B cell (primary cell): ENCODE measurements at regions of chr20 and their contacts with region 1.

Region 1: DNA sequence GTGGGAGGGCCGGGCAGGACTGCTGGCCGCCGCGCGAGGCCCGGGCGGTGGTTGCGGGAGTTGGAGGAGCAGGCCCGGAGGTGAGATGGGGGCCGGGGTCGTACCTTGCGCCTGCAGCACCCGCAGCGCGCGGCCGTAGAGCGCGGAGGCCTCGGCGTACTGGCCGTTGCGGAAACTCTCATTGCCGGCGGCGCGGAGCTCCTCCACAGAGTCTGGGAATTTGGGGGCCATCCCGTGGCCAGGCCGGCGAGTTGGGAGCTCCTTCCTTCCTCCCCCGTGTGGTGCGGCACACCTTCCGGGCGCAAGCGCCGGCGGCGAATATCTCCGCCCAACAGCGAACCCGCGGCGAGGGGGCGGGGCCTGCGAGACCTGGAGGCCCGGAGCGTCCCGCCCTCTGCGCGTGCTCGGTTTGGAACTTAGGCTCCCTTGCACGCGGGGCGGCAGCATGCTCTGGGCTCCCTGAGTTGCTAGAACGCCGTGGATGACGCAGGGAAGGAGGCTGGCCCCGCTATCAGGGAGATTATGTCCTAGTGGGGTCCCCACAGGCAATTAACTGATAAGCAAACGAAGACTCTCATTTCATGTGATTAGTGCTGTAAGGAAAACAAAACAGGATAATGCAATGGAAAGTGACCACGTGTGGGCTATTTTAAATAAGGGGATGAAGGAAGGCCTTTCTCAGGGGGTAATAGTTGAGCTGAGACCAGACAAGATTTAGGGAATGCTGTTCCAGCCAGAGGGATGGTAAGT is at the start of gene TOMM34:
- DNase-seq: peak; percentile 93
- ATAC-seq: peak; percentile 96
- H3K4me3 ChIP-seq: peak within 1 kb of the TSS; percentile 36 to 93 (median 82)
- H3K4me3 Mint-ChIP-seq: peak within 1 kb of the TSS; percentile 92
- H3K27ac ChIP-seq: peak within 1 kb of the TSS in 1 of 2 donors; percentile 70
- H3K27ac Mint-ChIP-seq: peak within 1 kb of the TSS; percentile 93
- H3K4me1 ChIP-seq: peaks cover 42 to 54% of the 10 kb centered on the region in 2 donors
- H3K4me1 Mint-ChIP-seq: peaks cover 57% of the 10 kb centered on the region
- H3K27me3 ChIP-seq: no peaks in the 10 kb centered on the region
- H3K27me3 Mint-ChIP-seq: no peaks in the 10 kb centered on the region
- CTCF ChIP-seq: no peak
- total RNA-seq, gene TOMM34: 21.8 and 21.9 TPM in 2 replicates

Region 2: DNA sequence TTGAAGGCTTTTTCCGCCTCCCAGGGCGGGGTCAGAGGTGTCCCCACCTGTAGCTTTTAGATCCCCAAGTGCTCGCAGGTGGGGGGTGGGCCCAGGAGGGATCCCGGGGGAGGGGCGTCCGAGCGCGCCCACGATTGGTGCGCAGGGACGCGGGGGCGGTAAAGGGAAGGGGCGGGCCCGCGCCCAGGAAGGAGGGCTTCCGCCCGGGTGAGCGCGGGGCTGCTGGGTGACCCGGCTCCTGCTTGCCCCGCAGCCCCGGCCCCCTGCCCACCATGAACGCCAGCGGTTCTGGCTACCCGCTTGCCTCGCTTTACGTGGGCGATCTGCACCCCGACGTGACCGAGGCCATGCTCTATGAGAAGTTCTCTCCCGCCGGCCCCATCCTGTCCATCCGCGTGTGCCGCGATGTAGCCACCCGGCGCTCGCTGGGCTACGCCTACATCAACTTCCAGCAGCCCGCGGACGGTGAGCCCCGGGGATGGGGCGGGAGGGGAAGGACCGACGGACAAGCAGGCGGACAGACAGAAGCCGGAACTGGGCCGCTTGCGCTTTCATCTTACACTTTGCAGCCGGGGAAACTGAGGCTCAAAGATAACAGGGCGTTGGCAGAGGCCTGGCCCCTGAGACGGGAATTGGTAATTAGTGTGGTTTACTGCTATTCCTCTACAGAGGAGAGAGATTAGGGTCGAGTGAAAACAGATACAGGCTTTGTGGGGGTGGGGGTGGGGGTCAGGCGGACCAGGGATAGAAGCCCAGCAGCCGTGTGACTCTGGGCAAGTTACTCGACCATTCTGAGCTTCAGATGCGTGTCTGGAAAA is 50.2 kb before region 1 on chr20 and contains the start of gene PABPC1L:
- CTCF ChIA-PET with region 1: interaction called, 5 read pairs
- POLR2A ChIA-PET with region 1: no interaction called
- intact Hi-C with region 1: loop called (anchors 2 kb)
- DNase-seq: peak; percentile 84
- ATAC-seq: peak; percentile 98
- H3K4me3 ChIP-seq: peak within 1 kb of the TSS; percentile 50 to 85 (median 81)
- H3K4me3 Mint-ChIP-seq: peak within 1 kb of the TSS; percentile 91
- H3K27ac ChIP-seq: peak within 1 kb of the TSS in 1 of 2 donors; percentile 65
- H3K27ac Mint-ChIP-seq: peak within 1 kb of the TSS; percentile 65
- H3K4me1 ChIP-seq: peaks cover 13 to 18% of the 10 kb centered on the region in 2 donors
- H3K4me1 Mint-ChIP-seq: peaks cover 24% of the 10 kb centered on the region
- H3K27me3 ChIP-seq: no peaks in the 10 kb centered on the region
- H3K27me3 Mint-ChIP-seq: no peaks in the 10 kb centered on the region
- CTCF ChIP-seq: no peak
- total RNA-seq, gene PABPC1L: 100 and 105 TPM in 2 replicates

Region 3: GRCh38 chr20:44979090-44979621 is 18.9 kb after region 1 on chr20:
- CTCF ChIA-PET with region 1: interaction called, 32 read pairs
- POLR2A ChIA-PET with region 1: interaction called, 43 read pairs
- intact Hi-C with region 1: loop called (anchors 2 kb)
- DNase-seq: peak; percentile 93
- ATAC-seq: peak; percentile 91
- H3K4me3 ChIP-seq: peak overlapping the region; percentile 4 to 54 (median 32)
- H3K4me3 Mint-ChIP-seq: peak overlapping the region; percentile 68
- H3K27ac ChIP-seq: peak overlapping the region; percentile 97 to 98
- H3K27ac Mint-ChIP-seq: peak overlapping the region; percentile 95
- H3K4me1 ChIP-seq: peaks cover 34 to 43% of the 10 kb centered on the region in 2 donors
- H3K4me1 Mint-ChIP-seq: peaks cover 65% of the 10 kb centered on the region
- H3K27me3 ChIP-seq: no peaks in the 10 kb centered on the region
- H3K27me3 Mint-ChIP-seq: no peaks in the 10 kb centered on the region
- CTCF ChIP-seq: no peak

Region 4: DNA sequence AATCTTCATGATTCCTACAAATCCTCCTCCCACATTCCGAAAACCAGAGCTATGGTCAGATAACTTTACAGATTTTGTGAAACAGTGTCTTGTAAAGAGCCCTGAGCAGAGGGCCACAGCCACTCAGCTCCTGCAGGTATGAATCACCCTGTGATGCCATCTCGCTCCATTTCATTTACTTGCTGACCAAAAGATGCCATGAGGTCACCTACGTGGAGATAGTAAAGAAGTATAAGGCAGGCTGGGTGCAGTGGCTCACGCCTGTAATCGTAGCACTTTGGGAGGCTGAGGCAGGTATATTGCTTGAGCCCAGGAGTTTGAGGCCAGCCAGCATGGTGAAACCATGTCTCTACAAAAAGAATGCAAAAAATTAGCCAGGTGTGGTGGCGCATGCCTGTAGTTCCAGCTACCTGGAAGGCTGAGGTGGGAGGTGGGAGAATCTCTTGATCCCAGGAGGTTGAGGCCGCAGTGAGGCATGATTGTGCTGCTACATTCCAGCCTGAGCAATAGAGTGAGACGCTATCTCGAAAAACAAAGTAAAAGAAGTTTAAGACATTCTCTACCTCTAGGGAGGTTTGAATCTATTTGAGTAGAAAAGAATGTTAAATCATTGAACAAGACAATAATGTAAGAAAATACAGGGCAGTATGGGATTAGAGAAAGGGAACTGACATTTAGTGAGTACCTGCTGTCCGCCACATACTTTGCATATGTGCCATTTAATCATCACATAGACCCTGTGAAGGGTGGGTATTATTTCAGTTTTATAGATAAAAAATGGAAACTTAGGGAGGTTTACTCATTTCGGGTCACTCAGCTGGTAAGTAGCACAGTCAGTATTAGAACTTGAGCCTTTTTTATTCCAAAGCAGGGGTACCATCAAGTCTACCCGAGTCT is 37.1 kb after region 1 on chr20:
- CTCF ChIA-PET with region 1: interaction called, 4 read pairs
- POLR2A ChIA-PET with region 1: no interaction called
- intact Hi-C with region 1: loop called (anchors 5 kb)
- DNase-seq: peak; percentile 45
- ATAC-seq: peak; percentile 91
- H3K4me3 ChIP-seq: no peak overlapping the region
- H3K4me3 Mint-ChIP-seq: peak overlapping the region; percentile 68
- H3K27ac ChIP-seq: peak overlapping the region in 1 of 2 donors; percentile 70
- H3K27ac Mint-ChIP-seq: peak overlapping the region; percentile 75
- H3K4me1 ChIP-seq: peaks cover 13 to 23% of the 10 kb centered on the region in 2 donors
- H3K4me1 Mint-ChIP-seq: peaks cover 40% of the 10 kb centered on the region
- H3K27me3 ChIP-seq: no peaks in the 10 kb centered on the region
- H3K27me3 Mint-ChIP-seq: no peaks in the 10 kb centered on the region
- CTCF ChIP-seq: no peak

Region 5: DNA sequence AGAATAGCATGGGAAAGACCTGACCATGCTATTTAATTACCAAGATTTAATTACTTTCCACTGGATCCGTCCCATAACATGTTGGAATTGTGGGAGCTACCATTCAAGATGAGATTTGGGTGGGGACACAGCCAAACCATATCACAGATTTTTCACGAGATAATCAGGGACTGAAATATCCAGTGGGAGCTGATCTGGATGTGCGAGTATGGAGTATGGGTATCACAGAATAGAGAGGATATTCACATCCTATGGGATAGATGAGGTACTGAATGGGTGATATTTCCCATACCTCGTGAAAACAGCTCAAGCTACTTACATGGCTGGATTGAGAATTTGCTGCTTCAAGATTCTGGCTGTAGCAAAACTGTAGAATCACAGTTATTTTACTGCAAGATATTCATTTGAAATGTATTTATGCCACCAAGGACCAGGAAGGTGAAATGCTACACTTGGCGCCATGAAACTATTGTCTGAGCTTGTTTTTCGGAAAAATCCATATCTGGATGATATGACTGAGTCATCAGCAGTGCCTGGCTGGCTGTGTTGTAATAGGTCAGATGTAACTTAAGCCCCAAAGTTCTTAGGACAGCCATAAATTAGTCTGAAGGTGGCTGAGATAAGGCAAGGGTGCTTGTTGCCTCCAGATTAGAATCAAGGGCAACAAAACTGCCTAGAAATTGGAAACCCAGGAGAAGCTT is 110.8 kb after region 1 on chr20:
- CTCF ChIA-PET with region 1: no interaction called
- POLR2A ChIA-PET with region 1: no interaction called
- intact Hi-C with region 1: no loop called
- DNase-seq: no peak
- ATAC-seq: no peak
- H3K4me3 ChIP-seq: no peak overlapping the region
- H3K4me3 Mint-ChIP-seq: no peak overlapping the region
- H3K27ac ChIP-seq: peak overlapping the region in 1 of 2 donors; percentile 34
- H3K27ac Mint-ChIP-seq: no peak overlapping the region
- H3K4me1 ChIP-seq: no peaks in the 10 kb centered on the region
- H3K4me1 Mint-ChIP-seq: peaks cover 31% of the 10 kb centered on the region
- H3K27me3 ChIP-seq: no peaks in the 10 kb centered on the region
- H3K27me3 Mint-ChIP-seq: no peaks in the 10 kb centered on the region
- CTCF ChIP-seq: no peak

Region 6: GRCh38 chr20:45415774-45416637 is 455.7 kb after region 1 on chr20 and contains the start of gene PIGT:
- CTCF ChIA-PET with region 1: no interaction called
- POLR2A ChIA-PET with region 1: no interaction called
- intact Hi-C with region 1: loop called (anchors 5 kb)
- DNase-seq: peak; percentile 95
- ATAC-seq: peak; percentile 75
- H3K4me3 ChIP-seq: peak within 1 kb of the TSS; percentile 80 to 97 (median 97)
- H3K4me3 Mint-ChIP-seq: peak within 1 kb of the TSS; percentile 99
- H3K27ac ChIP-seq: peak within 1 kb of the TSS; percentile 81 to 90
- H3K27ac Mint-ChIP-seq: peak within 1 kb of the TSS; percentile 100
- H3K4me1 ChIP-seq: peaks cover 30 to 38% of the 10 kb centered on the region in 2 donors
- H3K4me1 Mint-ChIP-seq: peaks cover 53% of the 10 kb centered on the region
- H3K27me3 ChIP-seq: no peaks in the 10 kb centered on the region
- H3K27me3 Mint-ChIP-seq: no peaks in the 10 kb centered on the region
- CTCF ChIP-seq: no peak
- total RNA-seq, gene PIGT: 106 and 110 TPM in 2 replicates